ENCODE measurements at regions of chr18 and their contacts with region 1.

Region 1: DNA sequence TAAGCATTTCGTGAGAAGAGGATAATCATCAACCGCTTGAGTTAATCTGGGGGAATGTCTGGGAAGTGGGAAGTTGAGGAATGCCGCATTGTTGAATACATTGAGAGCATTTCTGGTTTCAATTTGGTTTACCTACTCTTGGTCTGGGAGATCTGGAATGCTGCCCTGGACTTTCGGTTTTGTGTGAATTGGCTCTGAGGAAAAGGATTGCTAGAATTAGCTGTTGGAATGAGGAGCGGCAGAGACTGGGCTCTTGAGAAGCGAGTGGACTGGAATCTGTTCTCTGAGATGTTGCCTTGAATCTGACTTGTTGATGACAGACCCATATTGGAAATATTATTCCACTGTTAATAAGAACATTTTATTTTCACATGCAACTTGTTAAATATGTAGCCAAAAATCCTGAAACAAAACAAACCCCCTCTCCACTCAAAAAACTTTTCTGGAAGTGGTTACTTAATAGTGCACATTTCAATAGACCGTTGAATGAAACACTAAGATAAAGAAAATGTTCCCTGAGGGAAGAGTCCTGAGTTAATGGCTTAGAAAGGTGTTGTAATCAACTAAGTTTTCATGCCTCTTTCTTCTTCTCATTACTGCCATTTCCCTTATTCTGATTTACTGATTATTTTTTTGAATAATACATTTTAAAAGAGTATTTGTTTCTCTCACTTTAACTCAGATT is 50.8 kb downstream of the PTPRM start:
- DNase-seq: no peak

Region 2: DNA sequence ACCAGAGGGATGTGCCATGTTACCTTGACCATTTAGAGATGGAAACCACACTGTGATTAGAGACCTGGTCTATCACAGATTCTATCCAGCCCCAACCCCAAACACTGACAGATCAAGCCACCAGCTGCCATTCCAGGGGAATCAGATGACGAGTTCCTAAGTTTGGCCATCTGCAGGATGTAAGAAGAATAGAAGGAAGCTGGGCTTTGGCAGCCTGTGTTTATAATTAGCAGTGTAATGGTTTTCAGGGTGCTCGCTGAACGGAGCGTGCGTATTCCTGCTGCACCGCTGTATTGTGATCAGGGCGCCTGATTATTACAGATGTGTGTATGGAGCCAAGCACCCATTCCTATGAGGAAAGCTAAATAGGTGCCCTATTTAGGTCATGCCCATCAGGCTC is 248.9 kb before region 1 on chr18:
- intact Hi-C with region 1: no loop called
- DNase-seq: no peak

Region 3: GRCh38 chr18:7749510-7749981 is 131.7 kb after region 1 on chr18:
- intact Hi-C with region 1: loop called in 1 of 2 experiments (anchors 10 kb)
- DNase-seq: no peak